Posterior vena cava (tissue), 2 donors: ENCODE measurements at regions of chr11 and their contacts with region 1.

Region 1: DNA sequence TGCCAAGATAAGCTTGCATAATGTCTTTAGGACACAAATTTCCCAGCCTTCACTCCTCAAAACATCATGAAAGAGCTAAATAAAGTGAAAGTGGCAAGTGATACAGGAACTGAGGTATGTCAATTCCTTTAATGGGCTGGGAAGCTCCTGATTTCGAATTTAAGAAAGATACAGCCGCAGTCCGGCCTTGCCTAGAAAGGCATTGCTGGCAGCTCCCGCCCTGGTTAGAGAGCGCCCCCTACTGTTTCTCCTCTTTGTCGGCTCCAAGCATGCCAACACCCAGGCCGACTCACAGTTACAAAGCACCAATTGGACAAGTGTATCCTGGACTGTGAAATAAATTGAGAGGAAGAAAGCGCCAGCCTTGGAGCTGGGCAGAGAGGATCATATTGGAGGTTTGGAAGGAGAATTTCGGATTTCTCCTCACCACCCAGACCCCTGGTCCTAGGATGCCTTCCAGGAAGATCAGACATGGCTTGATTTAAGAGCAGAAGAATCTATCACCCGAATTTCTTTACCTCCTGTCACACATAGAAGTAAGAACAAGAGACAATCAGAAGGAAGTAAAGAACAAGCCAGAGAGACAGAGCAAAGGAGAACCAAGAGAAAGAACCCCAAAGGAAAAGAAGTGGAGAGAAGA is 84.0 kb downstream of the FAM76B start:
- DNase-seq: peak; percentile 93

Region 2: GRCh38 chr11:95089620-95090542 is 615.7 kb before region 1 on chr11 and contains the start of gene ENDOD1:
- intact Hi-C with region 1: loop called in 1 of 2 experiments (anchors 10 kb)
- DNase-seq: peak; percentile 96
- total RNA-seq, gene ENDOD1: 41.7 to 50.2 TPM

Region 3: GRCh38 chr11:95150946-95151684 is 554.5 kb before region 1 on chr11:
- intact Hi-C with region 1: loop called (anchors 5 kb)
- DNase-seq: peak; percentile 96

Region 4: GRCh38 chr11:95156916-95157541 is 548.6 kb before region 1 on chr11:
- intact Hi-C with region 1: loop called (anchors 5 kb)
- DNase-seq: peak; percentile 85

Region 5: GRCh38 chr11:95231127-95231880 is 474.3 kb before region 1 on chr11 and contains the start of gene SESN3:
- intact Hi-C with region 1: loop called in 1 of 2 experiments (anchors 10 kb)
- DNase-seq: peak; percentile 99
- total RNA-seq, gene SESN3: 19.0 to 23.6 TPM